AG04450 (cell line): ENCODE measurements at regions of chr14 and their contacts with region 1.

Region 1: GRCh38 chr14:81220830-81221578 is at the start of gene GTF2A1:
- DNase-seq: peak; percentile 90
- H3K4me3 ChIP-seq: peak within 1 kb of the TSS; percentile 89
- H3K27ac ChIP-seq: peak within 1 kb of the TSS; percentile 100
- H3K27me3 ChIP-seq: no peaks in the 10 kb centered on the region
- CTCF ChIP-seq: no peak
- polyA plus RNA-seq, gene GTF2A1: 22.9 and 24.5 TPM in 2 replicates

Region 2: GRCh38 chr14:81400852-81401251 is 179.8 kb after region 1 on chr14:
- CTCF ChIA-PET with region 1: no interaction called
- POLR2A ChIA-PET with region 1: no interaction called
- DNase-seq: peak; percentile 6
- H3K4me3 ChIP-seq: no peak overlapping the region
- H3K27ac ChIP-seq: no peak overlapping the region
- H3K27me3 ChIP-seq: no peaks in the 10 kb centered on the region
- CTCF ChIP-seq: no peak

Region 3: DNA sequence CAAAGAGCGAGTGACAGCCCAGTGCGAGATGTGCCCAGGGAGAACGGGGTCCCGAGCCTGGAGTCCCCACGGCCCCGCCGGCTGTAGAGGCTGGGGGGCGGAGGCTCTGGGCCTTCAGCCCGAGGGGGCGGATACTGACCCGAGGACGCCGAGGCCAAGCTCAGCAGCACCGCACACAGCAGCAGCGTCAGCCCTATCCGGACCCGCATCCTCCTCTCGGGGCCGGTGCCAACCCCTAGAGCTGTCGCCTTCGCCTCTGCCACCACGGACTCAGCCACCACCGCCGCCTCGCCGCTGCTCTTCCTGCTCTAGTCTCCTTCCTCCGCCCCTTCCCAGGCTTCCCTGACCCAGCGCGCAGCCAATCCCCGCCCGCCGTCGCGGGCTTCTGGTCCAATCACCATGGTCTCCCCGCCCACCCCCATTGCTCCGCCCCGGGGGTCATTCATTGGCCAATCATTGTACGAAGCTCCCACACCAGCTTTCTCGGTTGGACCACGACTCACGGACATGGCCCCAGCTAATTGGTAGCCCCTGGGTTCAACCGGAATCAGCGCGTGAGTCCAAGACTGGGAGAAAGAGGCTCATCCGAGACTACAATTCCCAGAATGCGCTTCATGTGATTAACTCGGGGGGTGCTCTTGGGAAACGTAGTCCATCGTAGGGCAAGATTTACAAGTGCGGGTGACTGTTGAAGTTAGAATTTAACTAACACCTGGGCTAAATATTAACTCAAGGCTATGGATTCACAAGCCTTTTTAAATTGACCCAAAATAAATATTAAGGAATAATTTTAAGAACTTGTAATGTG is 312.7 kb after region 1 on chr14 and contains the start of gene SEL1L:
- CTCF ChIA-PET with region 1: no interaction called
- POLR2A ChIA-PET with region 1: interaction called, 15 read pairs
- DNase-seq: peak; percentile 98
- H3K4me3 ChIP-seq: peak within 1 kb of the TSS; percentile 96
- H3K27ac ChIP-seq: peak within 1 kb of the TSS; percentile 32
- H3K27me3 ChIP-seq: no peaks in the 10 kb centered on the region
- CTCF ChIP-seq: no peak
- polyA plus RNA-seq, gene SEL1L: 36.5 and 40.7 TPM in 2 replicates